A549 (cell line): ENCODE measurements at regions of chr20 and their contacts with region 1.

Region 1: DNA sequence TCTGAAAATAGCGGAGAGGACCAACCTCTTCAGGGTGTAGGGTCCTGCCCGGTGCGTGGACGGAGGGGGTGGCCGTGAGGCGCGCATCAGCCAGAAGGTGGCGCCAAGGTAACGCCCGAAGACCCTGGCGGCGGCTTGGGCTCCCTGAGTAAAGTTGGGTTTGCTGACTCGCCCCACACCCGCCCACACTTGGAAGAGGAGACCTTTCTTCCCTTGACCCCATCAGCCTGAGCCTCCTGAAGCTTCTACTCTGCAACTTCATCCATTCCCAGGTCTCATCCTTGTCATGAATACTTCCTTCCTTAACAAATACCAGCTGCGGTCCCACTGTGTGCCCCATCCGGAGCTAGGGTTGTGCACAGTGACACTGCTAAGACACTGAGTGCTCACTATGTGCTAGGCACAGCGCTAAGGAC is 14.6 kb downstream of the CD40 start:
- DNase-seq: peak; percentile 61 to 77
- ATAC-seq: peak; percentile 90 to 96
- H3K4me3 ChIP-seq: no peak overlapping the region
- H3K27ac ChIP-seq: no peak overlapping the region
- H3K4me1 ChIP-seq: no peaks in the 10 kb centered on the region
- CTCF ChIP-seq: peak; percentile 78
- EP300 ChIP-seq: no peak
- POLR2A ChIP-seq: no peak
- RAD21 ChIP-seq: peak; percentile 89 to 92

Region 2: GRCh38 chr20:46145713-46146112 is 13.0 kb after region 1 on chr20:
- CTCF ChIA-PET with region 1: interaction called, 28 read pairs
- POLR2A ChIA-PET with region 1: no interaction called
- DNase-seq: no peak
- ATAC-seq: no peak
- H3K4me3 ChIP-seq: no peak overlapping the region
- H3K27ac ChIP-seq: no peak overlapping the region
- H3K4me1 ChIP-seq: no peaks in the 10 kb centered on the region
- CTCF ChIP-seq: no peak
- EP300 ChIP-seq: no peak
- POLR2A ChIP-seq: no peak
- RAD21 ChIP-seq: no peak

Region 3: DNA sequence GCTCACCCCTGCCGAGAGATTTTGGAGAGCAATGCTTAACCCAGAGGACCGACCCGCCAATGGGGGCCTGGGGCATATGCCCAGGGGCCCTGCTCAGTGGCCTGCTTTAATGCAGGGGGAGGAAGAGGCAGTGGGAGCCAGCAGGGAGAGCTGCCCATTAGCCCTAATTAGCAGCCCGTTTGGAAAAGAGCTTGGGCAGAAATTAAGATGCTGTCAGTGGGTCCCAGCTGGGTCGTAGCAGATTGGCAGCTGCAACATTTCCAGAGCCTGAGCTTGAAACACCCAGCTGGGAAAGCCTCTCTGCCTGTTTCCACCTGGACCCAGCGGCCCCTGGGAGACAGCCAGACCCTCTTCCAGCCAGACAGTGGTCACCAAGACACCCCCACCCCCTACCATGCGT is 24.9 kb after region 1 on chr20:
- CTCF ChIA-PET with region 1: interaction called, 15 read pairs
- POLR2A ChIA-PET with region 1: no interaction called
- DNase-seq: no peak
- ATAC-seq: no peak
- H3K4me3 ChIP-seq: no peak overlapping the region
- H3K27ac ChIP-seq: no peak overlapping the region
- H3K4me1 ChIP-seq: no peaks in the 10 kb centered on the region
- CTCF ChIP-seq: no peak
- EP300 ChIP-seq: no peak
- POLR2A ChIP-seq: no peak
- RAD21 ChIP-seq: no peak

Region 4: DNA sequence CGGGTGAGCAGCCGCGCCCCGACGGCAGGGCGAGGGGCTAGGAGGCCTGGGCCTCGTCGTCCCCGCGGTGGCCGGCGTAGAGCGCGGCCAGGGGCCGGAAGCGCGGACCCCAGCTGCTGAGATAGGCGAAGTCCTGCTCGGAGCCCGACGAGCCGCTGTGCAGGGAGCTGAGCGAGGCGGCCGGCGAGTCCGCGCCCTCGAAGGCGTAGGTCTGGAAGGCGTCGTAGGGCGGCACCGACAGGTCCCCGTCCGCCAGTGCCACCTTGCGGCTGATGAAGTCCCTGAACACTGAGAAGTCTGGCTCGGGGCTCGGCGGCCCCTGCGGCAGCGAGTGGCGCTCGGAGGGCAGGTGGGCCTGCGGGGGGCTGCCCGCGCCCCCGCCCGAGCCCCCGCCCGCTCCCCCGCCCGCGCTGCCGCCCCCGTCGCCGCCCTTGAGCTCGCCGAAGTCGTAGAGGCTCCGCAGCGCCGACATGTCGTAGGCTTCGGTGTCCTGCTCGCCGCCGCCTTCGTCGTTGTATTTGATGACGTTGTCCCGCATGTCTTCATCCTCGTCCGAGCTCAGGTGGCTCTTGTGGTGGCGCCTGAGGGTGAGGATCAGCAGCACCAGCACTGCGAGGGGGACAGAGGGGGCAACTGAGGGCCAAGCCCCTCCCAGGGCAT is 41.9 kb after region 1 on chr20:
- CTCF ChIA-PET with region 1: interaction called, 72 read pairs
- POLR2A ChIA-PET with region 1: no interaction called
- DNase-seq: peak; percentile 75 to 87
- ATAC-seq: peak; percentile 84 to 96
- H3K4me3 ChIP-seq: peak overlapping the region; percentile 31; the same call in 1 of the 3 replicates
- H3K27ac ChIP-seq: peak overlapping the region in 1 of 2 experiments; percentile 56; a peak in 1 of 6 replicates
- H3K4me1 ChIP-seq: no peaks in the 10 kb centered on the region
- CTCF ChIP-seq: peak; percentile 68
- EP300 ChIP-seq: no peak
- POLR2A ChIP-seq: no peak
- RAD21 ChIP-seq: peak; percentile 52 to 62

Region 5: DNA sequence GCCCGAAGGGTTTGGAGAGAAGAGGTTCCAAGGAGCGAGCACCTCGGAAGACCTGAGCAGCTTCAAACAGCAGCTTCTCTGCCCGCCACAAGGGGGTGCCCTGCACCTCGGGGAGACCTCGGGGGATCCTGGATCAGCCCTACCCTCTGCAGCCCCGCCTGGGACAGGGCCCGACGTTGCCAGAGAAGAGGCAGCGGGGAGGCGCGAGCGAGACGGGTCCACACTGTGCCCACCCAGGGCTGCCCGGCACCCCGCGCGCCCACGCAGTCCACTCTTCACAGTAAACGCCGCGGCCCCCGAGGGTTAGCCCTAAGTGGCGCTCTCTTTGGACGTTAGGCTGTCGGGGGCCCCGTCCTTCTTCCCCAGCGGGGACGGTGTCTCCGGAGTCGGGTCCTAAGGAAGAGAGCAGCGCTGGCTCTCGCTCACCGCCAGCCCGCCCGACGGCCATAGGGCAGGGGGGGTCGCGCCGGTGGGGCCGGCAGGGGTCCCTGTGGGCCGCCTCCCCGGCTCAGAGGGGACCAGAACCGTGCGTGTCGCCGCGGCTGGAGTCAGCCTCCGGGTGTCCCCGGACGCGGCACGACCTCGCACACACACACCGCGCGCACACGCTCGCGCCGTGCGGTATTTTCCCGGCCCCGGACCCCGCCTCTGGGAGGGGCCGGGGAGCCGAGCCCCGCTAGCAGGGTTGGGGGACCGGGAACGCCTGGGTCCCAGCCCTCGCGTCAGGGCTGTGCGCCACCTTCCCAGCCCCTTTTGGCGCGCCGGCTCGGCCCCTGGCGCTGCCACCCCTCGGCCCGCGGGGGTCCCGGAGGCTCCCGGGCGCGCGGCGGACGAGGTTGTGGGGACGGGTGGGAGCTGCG is 174.7 kb after region 1 on chr20:
- CTCF ChIA-PET with region 1: interaction called, 28 read pairs
- POLR2A ChIA-PET with region 1: no interaction called
- DNase-seq: peak; percentile 69 to 87
- ATAC-seq: peak; percentile 65 to 91; a peak in 5 of 6 replicates
- H3K4me3 ChIP-seq: peak overlapping the region; percentile 55
- H3K27ac ChIP-seq: peak overlapping the region in 1 of 2 experiments; percentile 70; a peak in 4 of 6 replicates
- H3K4me1 ChIP-seq: peaks cover 3% of the 10 kb centered on the region
- CTCF ChIP-seq: peak; percentile 74
- EP300 ChIP-seq: no peak
- POLR2A ChIP-seq: no peak
- RAD21 ChIP-seq: peak; percentile 72

Region 6: GRCh38 chr20:46349035-46349741 is 216.5 kb after region 1 on chr20:
- CTCF ChIA-PET with region 1: interaction called, 38 read pairs
- POLR2A ChIA-PET with region 1: interaction called, 3 read pairs
- DNase-seq: peak; percentile 43 to 67
- ATAC-seq: peak; percentile 46 to 77; a peak in 4 of 6 replicates
- H3K4me3 ChIP-seq: no peak overlapping the region
- H3K27ac ChIP-seq: no peak overlapping the region
- H3K4me1 ChIP-seq: peaks cover 14% of the 10 kb centered on the region
- CTCF ChIP-seq: peak; percentile 66
- EP300 ChIP-seq: no peak
- POLR2A ChIP-seq: no peak
- RAD21 ChIP-seq: peak; percentile 74 to 80

Region 7: DNA sequence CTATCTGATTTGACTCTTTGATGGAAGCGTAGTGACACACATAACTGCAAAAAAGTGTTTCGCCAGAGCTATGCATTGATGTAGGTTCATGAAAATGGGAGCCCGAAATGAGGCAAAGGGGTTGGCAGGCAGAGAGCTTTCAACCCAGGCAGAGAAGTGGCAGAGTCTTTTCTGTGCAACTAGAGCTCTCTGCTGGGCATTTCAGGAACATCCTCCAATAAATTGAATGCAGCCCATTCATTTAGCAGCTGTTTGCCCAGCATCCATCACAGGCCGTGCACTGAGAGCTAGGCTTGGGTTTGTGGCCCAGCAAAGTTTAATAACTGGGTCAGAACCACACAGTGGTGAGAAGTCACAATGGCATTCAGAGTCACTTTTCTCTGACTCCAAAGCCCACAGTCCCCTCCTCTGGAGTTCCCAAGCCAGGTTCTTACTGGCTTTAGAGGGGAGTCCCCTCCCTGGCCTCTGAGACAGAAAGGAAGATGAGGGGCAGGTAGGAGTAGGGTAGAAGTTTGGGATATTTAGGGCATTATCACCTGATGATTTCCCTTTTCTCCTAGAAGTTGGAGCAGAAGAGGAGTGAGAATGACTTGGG is 305.5 kb after region 1 on chr20:
- CTCF ChIA-PET with region 1: interaction called, 13 read pairs
- POLR2A ChIA-PET with region 1: no interaction called
- DNase-seq: peak; percentile 50 to 65
- ATAC-seq: peak; percentile 91 to 92
- H3K4me3 ChIP-seq: no peak overlapping the region
- H3K27ac ChIP-seq: no peak overlapping the region
- H3K4me1 ChIP-seq: no peaks in the 10 kb centered on the region
- CTCF ChIP-seq: peak; percentile 49
- EP300 ChIP-seq: no peak
- POLR2A ChIP-seq: no peak
- RAD21 ChIP-seq: peak; percentile 64 to 72